ENCODE measurements at regions of chr7 and their contacts with region 1.

Region 1: DNA sequence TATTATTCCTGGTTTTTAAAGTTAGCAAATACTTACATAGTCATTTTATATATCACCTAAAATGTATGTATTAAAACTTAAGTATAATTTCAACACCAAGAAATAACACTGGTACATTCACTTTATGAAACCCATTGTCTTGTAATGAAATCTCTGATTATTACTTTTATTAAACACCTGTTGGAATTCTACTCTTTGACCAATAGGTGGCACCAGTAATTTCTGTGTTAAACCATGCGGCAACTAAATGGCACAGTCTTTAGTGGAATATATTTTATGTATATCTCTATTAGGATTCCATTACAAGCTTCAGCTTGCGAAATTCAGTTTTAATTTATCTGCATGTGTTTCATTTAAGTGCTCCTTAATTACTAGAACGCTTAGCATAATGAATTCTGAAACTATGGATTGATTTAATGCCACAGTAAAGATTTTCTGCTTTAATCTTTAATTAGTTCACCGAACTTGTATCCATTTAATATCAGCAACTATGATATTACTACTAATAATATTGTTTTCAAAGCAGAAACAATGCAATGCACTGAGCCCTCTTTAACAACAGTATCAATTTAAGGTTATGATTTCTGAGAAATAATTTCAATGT is 181.3 kb downstream of the MAGI2 start:
- DNase-seq: no peak
- H3K4me3 ChIP-seq: no peak overlapping the region
- H3K27ac ChIP-seq: no peak overlapping the region
- H3K4me1 ChIP-seq: no peaks in the 10 kb centered on the region
- H3K27me3 ChIP-seq: no peaks in the 10 kb centered on the region
- CTCF ChIP-seq: no peak
- POLR2A ChIP-seq: no peak

Region 2: GRCh38 chr7:81007051-81007450 is 1734.9 kb after region 1 on chr7:
- intact Hi-C with region 1: loop called (anchors 5 kb)
- DNase-seq: no peak
- H3K4me3 ChIP-seq: no peak overlapping the region
- H3K27ac ChIP-seq: no peak overlapping the region
- H3K4me1 ChIP-seq: peaks cover 27% of the 10 kb centered on the region
- H3K27me3 ChIP-seq: no peaks in the 10 kb centered on the region
- CTCF ChIP-seq: no peak
- POLR2A ChIP-seq: no peak

Measured in vagina (tissue), 2 donors.